ENCODE measurements at regions of chr12 and their contacts with region 1.

Region 1: GRCh38 chr12:55946553-55946952 is 15.6 kb downstream of the DGKA start:
- DNase-seq: no peak
- ATAC-seq: peak; percentile 45
- H3K4me3 Mint-ChIP-seq: no peak overlapping the region
- H3K27ac Mint-ChIP-seq: peak overlapping the region; percentile 75
- H3K4me1 Mint-ChIP-seq: peaks cover 38% of the 10 kb centered on the region
- H3K27me3 Mint-ChIP-seq: no peaks in the 10 kb centered on the region
- CTCF ChIP-seq: no peak

Region 2: GRCh38 chr12:55915482-55915859 is 31.1 kb before region 1 on chr12:
- CTCF ChIA-PET with region 1: no interaction called
- POLR2A ChIA-PET with region 1: no interaction called
- intact Hi-C with region 1: no loop called
- DNase-seq: no peak
- ATAC-seq: no peak
- H3K4me3 Mint-ChIP-seq: no peak overlapping the region
- H3K27ac Mint-ChIP-seq: peak overlapping the region; percentile 59
- H3K4me1 Mint-ChIP-seq: peaks cover 33% of the 10 kb centered on the region
- H3K27me3 Mint-ChIP-seq: no peaks in the 10 kb centered on the region
- CTCF ChIP-seq: no peak

Region 3: DNA sequence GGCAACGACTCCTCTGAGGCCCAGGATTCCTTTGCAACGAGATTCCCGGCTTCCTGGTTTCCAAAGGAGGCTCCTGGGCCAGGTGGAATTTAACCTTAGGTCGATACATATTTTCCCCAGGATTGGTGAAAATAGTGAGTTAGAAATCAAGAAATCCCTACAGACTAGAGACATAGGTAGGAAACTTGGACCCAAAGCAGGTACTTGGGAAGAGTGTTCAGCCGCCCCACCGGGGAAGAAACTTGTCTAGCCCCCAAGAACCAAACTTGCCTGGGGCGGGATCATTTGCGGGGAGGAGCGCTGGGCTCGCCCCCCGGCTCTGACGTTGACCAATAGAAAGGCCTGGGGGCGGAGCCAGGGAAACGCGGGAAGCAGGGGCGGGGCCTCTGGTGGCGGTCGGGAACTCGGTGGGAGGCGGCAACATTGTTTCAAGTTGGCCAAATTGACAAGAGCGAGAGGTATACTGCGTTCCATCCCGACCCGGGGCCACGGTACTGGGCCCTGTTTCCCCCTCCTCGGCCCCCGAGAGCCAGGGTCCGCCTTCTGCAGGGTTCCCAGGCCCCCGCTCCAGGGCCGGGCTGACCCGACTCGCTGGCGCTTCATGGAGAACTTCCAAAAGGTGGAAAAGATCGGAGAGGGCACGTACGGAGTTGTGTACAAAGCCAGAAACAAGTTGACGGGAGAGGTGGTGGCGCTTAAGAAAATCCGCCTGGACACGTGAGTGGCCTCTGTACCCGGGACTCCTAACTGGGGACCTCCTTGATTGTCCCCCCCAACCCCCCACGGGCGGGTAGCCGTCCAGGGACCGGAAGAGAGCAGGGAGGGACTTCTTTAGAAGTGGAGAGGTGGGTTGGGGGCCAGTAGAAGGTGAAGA is 20.1 kb after region 1 on chr12 and contains the start of gene CDK2:
- CTCF ChIA-PET with region 1: no interaction called
- POLR2A ChIA-PET with region 1: interaction called, 5 read pairs
- intact Hi-C with region 1: loop called (anchors 1 kb)
- DNase-seq: peak; percentile 96
- ATAC-seq: peak; percentile 98
- H3K4me3 Mint-ChIP-seq: peak within 1 kb of the TSS; percentile 98
- H3K27ac Mint-ChIP-seq: peak within 1 kb of the TSS; percentile 89
- H3K4me1 Mint-ChIP-seq: peaks cover 22% of the 10 kb centered on the region
- H3K27me3 Mint-ChIP-seq: no peaks in the 10 kb centered on the region
- CTCF ChIP-seq: no peak
- total RNA-seq, gene CDK2: 86.7 to 90.1 TPM

Measured in activated CD8-positive, alpha-beta T cell treated with anti-CD3 and anti-CD28 coated beads for 36 hours (primary cell).